CD4-positive, alpha-beta T cell (primary cell): ENCODE measurements at regions of chr3 and their contacts with region 1.

Region 1: DNA sequence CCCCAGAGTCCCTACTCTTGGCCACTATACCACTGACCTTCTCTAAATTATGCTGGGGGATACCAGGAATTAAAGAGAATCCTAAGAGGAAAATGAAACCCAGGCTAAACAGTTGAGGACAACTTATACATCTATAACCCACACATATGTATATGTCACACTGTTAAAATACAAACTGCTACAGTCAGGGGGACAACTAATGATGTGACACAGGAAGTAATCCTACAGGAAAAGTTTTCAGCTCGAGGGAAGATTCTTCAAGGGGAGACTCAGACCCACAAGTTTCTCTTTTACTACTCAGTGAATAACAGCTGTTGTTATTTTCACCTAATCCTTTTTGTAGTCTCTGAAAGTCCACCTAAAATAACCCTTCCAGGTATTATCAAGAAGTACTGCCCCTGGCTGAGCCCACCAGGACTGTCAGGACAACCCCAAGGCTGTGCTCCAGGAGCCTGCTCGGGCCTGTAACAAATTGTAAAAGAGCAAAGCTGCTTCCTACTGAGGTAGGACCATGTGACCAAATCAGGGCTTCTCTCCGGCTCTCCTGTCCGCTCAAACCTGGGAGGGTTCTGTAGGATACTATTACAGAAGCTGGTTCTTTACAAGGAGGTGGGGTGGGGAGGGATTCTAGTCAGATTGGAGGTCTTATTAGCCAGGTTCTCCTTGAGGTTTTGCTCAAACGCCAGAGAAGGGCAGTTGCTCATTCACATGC is 91.6 kb downstream of the SRGAP3 start:
- DNase-seq: no peak
- ATAC-seq: no peak
- H3K4me3 ChIP-seq: no peak overlapping the region
- H3K4me3 Mint-ChIP-seq: no peak overlapping the region
- H3K27ac ChIP-seq: no peak overlapping the region
- H3K27ac Mint-ChIP-seq: no peak overlapping the region
- H3K4me1 ChIP-seq: no peaks in the 10 kb centered on the region
- H3K4me1 Mint-ChIP-seq: no peaks in the 10 kb centered on the region
- H3K27me3 ChIP-seq: no peaks in the 10 kb centered on the region
- H3K27me3 Mint-ChIP-seq: no peaks in the 10 kb centered on the region
- CTCF ChIP-seq: no peak

Region 2: GRCh38 chr3:9179826-9180763 is 22.3 kb after region 1 on chr3:
- CTCF ChIA-PET with region 1: no interaction called
- POLR2A ChIA-PET with region 1: no interaction called
- intact Hi-C with region 1: loop called in 1 of 2 experiments (anchors 2 kb)
- DNase-seq: peak in 3 of 14 experiments; percentile 19 to 29 (median 24)
- ATAC-seq: peak; percentile 46
- H3K4me3 ChIP-seq: peak overlapping the region; percentile 46
- H3K4me3 Mint-ChIP-seq: peak overlapping the region; percentile 79
- H3K27ac ChIP-seq: no peak overlapping the region
- H3K27ac Mint-ChIP-seq: peak overlapping the region; percentile 64
- H3K4me1 ChIP-seq: peaks cover 24% of the 10 kb centered on the region
- H3K4me1 Mint-ChIP-seq: peaks cover 29% of the 10 kb centered on the region
- H3K27me3 ChIP-seq: no peaks in the 10 kb centered on the region
- H3K27me3 Mint-ChIP-seq: no peaks in the 10 kb centered on the region
- CTCF ChIP-seq: no peak